PC-3 (cell line): ENCODE measurements at regions of chr7 and their contacts with region 1.

Region 1: GRCh38 chr7:22402250-22402649 is 45.3 kb upstream of the RAPGEF5 start:
- DNase-seq: peak; percentile 11
- ATAC-seq: peak; percentile 49
- H3K4me3 ChIP-seq: no peak overlapping the region
- H3K27ac ChIP-seq: peak overlapping the region; percentile 26
- H3K4me1 ChIP-seq: peaks cover 24% of the 10 kb centered on the region
- H3K27me3 ChIP-seq: no peaks in the 10 kb centered on the region
- CTCF ChIP-seq: no peak

Region 2: DNA sequence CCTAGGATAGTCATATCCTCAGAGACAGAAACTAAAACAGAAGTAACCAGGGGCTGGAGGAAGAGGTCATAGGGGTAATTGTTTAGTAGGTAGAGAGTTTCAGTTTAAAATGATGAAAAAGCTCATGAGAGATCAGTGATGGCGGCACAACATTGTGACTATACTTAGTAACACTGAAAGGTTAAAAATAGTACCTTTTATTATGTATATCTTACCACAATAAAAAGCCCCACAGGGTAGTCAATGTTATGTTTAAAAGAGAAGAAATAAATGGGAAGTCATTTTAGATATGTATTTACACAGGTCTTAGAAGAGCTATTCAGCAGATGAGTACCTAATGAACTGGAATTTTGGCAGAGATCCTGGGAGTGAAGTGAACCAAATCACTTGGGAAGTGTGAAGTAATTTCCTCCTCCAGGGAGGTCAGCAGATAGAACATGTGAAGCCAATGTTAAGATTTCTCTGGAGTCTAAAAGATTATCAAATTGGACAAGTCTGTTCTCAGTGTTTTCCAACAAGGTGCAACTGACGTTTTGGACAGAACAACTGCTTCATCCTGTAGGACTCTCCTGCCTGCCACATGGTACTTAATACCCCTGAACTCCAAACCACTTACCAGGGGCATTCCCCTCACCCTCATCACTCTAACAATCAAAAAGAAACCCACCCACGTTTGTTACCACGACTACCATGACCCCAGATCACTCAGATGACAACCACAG is 463.0 kb before region 1 on chr7:
- CTCF ChIA-PET with region 1: no interaction called
- POLR2A ChIA-PET with region 1: interaction called, 11 read pairs
- intact Hi-C with region 1: no loop called
- DNase-seq: peak; percentile 35
- ATAC-seq: peak; percentile 13
- H3K4me3 ChIP-seq: no peak overlapping the region
- H3K27ac ChIP-seq: peak overlapping the region; percentile 19
- H3K4me1 ChIP-seq: peaks cover 43% of the 10 kb centered on the region
- H3K27me3 ChIP-seq: no peaks in the 10 kb centered on the region
- CTCF ChIP-seq: no peak

Region 3: DNA sequence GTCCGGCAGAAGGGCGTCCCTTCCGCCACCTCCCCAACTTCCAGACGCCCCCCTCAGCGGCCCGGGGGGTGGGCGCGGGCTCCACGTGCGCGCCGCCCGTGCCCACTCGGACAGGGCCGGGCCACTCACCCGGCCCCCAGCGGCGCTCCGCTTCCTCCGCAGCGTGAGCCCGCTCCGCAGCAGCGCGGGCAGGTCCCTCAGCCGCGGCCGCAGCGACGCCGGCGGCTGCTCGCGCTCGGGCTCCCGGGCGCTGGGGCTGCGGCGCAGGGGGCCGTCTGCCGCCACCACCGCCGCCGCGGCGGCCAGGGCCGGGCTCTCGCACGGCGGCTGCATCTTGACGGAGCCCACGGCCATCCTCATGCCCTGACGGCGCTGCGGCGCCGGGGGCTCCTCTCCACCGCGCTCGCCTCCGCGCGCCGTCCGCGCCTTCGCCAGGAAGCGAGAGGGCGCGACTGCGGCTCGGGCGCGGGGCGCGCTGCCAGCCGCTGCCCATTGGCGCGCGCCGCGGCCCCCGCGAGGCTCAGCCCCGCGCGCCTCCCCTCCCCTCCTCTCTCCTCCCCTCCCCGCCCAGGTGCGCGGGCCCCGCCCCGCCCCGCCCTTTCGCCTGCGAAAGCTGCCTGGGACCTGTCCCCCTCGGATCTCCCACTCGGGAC is 45.4 kb before region 1 on chr7 and contains the start of gene RAPGEF5:
- CTCF ChIA-PET with region 1: no interaction called
- POLR2A ChIA-PET with region 1: no interaction called
- intact Hi-C with region 1: loop called (anchors 2 kb)
- DNase-seq: peak; percentile 67
- ATAC-seq: peak; percentile 53
- H3K4me3 ChIP-seq: peak within 1 kb of the TSS; percentile 74
- H3K27ac ChIP-seq: peak within 1 kb of the TSS; percentile 31
- H3K4me1 ChIP-seq: peaks cover 34% of the 10 kb centered on the region
- H3K27me3 ChIP-seq: no peaks in the 10 kb centered on the region
- CTCF ChIP-seq: no peak
- total RNA-seq, gene RAPGEF5: 5.6 and 10.8 TPM in 2 replicates

Region 4: GRCh38 chr7:22445140-22445743 is 43.0 kb after region 1 on chr7:
- CTCF ChIA-PET with region 1: no interaction called
- POLR2A ChIA-PET with region 1: no interaction called
- intact Hi-C with region 1: loop called (anchors 2 kb)
- DNase-seq: no peak
- ATAC-seq: no peak
- H3K4me3 ChIP-seq: no peak overlapping the region
- H3K27ac ChIP-seq: peak overlapping the region; percentile 91
- H3K4me1 ChIP-seq: peaks cover 40% of the 10 kb centered on the region
- H3K27me3 ChIP-seq: no peaks in the 10 kb centered on the region
- CTCF ChIP-seq: no peak